Naive thymus-derived CD4-positive, alpha-beta T cell (primary cell): ENCODE measurements at regions of chr18 and their contacts with region 1.

Region 1: DNA sequence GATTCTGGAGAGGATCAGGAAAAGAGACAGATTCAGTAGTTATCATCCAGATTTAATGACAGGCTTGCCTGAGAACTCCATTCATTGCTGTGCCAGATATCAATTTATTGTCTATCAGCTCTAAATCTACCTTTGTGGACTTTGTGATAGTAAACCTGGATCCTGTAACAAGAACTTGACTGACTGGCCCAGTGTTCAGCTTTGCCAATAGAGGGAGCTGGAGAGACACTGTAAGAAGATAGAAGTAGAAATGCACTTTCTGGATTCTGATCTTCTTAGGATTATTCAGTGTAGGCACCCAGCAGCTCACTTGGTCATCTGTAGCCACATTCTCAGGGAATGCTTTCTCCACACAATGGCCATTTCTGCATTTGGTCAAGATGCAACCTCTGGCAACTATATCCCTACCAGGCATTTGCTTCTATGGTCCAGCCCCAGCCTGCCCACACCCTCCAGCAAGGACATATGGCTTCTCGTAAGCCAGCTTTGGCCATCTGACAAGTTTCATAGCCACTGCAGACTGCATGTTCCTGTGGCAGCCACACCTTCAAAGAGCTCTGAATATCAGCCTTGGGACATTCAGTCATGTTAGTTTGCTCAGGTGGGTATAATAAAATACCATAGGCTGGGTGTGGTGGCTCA is 6.1 kb upstream of the SERPINB8 start:
- DNase-seq: peak in 7 of 9 donors; percentile 36 to 65 (median 54)
- ATAC-seq: peak; percentile 72
- H3K4me3 ChIP-seq: no peak overlapping the region
- H3K4me3 Mint-ChIP-seq: no peak overlapping the region
- H3K27ac ChIP-seq: no peak overlapping the region
- H3K27ac Mint-ChIP-seq: no peak overlapping the region
- H3K4me1 ChIP-seq: no peaks in the 10 kb centered on the region
- H3K4me1 Mint-ChIP-seq: peaks cover 0 to 8% (median 2%) of the 10 kb centered on the region in 7 donors
- H3K27me3 ChIP-seq: no peaks in the 10 kb centered on the region
- H3K27me3 Mint-ChIP-seq: peaks cover 0 to 36% (median 18%) of the 10 kb centered on the region in 5 donors

Region 2: DNA sequence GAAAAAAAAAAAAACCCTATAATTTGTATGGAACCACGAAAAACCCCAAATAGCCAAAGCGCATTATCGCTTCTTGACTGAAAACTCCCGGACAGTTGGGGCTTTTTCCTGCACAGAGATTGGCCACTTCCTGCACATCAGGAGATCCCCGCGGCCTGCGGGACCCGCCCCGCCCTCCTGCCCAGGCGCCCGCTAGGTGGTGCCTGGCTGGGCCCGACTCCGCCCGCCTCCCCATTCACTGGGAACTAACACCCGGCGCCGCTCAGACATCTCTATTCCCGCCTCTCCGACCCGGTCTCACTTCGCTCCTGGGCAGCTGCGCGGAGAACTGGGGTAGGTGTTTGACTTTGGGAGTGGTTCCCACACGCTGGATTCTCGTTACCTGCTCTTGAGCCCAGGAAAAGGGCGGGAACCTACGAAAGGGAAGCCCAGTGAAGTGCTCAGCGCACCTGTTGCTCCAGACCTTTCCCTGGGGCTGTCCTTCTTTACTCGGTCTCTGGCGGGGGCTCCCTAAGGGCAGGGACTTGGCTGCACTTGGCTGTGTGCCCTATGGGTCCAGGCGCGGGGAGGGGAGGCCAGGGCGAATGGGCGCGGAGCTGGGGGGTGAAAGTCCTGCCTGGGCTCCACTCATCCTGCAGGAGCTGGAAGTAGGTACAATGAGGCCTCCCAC is 14.5 kb before region 1 on chr18 and contains the start of gene HMSD:
- CTCF ChIA-PET with region 1: no interaction called
- POLR2A ChIA-PET with region 1: no interaction called
- intact Hi-C with region 1: loop called in 1 of 2 experiments (anchors 1 kb)
- DNase-seq: peak in 3 of 9 donors; percentile 17 to 81 (median 29)
- ATAC-seq: peak; percentile 89
- H3K4me3 ChIP-seq: peak within 1 kb of the TSS; percentile 39
- H3K4me3 Mint-ChIP-seq: peak within 1 kb of the TSS in 7 of 10 donors; percentile 26 to 84 (median 49)
- H3K27ac ChIP-seq: no peak within 1 kb of the TSS
- H3K27ac Mint-ChIP-seq: peak within 1 kb of the TSS in 1 of 9 donors; percentile 70
- H3K4me1 ChIP-seq: peaks cover 0 to 6% of the 10 kb centered on the region in 2 donors
- H3K4me1 Mint-ChIP-seq: peaks cover 0 to 34% (median 11%) of the 10 kb centered on the region in 7 donors
- H3K27me3 ChIP-seq: no peaks in the 10 kb centered on the region
- H3K27me3 Mint-ChIP-seq: peaks cover 25 to 49% (median 48%) of the 10 kb centered on the region in 5 donors
- total RNA-seq, gene HMSD: 5.1 TPM in 1 of 5 experiments, not detected in the others

Region 3: DNA sequence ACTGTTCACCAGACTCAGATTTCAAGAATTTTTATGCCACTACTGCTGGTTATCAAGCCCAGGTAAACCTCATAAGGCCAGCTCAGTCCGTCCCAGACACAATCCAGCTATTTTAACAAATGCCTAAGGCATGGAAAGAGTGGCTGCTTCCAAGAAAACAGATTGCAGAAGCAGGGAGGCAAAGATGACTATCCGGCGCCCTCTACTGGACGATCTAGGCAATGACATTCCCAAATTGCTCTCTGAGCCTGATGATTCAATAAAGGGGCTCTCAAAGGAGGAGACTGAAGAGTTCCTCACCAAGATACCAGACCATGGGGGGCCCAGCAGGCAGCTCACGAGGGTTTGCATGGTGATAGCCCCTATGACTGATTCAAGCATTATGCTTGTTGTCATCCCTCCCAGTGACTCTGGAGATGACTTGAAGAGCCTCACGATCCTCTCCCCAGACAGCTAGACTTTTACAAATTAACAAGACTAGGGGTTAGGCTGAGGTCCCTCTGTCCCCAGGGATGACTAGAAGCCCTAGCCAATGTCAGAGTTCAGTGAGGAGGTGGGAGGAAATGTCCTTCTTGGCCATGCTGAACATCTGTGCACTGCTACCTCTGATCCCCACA is 31.2 kb after region 1 on chr18:
- CTCF ChIA-PET with region 1: interaction called, 4 read pairs
- POLR2A ChIA-PET with region 1: no interaction called
- intact Hi-C with region 1: loop called (anchors 1 kb)
- DNase-seq: peak in 3 of 9 donors; percentile 25 to 39 (median 34)
- ATAC-seq: peak; percentile 52
- H3K4me3 ChIP-seq: no peak overlapping the region
- H3K4me3 Mint-ChIP-seq: no peak overlapping the region
- H3K27ac ChIP-seq: no peak overlapping the region
- H3K27ac Mint-ChIP-seq: peak overlapping the region in 1 of 9 donors; percentile 30
- H3K4me1 ChIP-seq: no peaks in the 10 kb centered on the region
- H3K4me1 Mint-ChIP-seq: peaks cover 0 to 9% (median 4%) of the 10 kb centered on the region in 7 donors
- H3K27me3 ChIP-seq: no peaks in the 10 kb centered on the region
- H3K27me3 Mint-ChIP-seq: no peaks in the 10 kb centered on the region